ENCODE measurements at regions of chr3 and their contacts with region 1.

Region 1: GRCh38 chr3:17841190-17841828 is 98.9 kb upstream of the TBC1D5 start:
- DNase-seq: peak; percentile 79
- ATAC-seq: peak; percentile 94

Region 2: GRCh38 chr3:17258823-17259436 is 582.4 kb before region 1 on chr3:
- intact Hi-C with region 1: loop called (anchors 5 kb)
- DNase-seq: no peak
- ATAC-seq: no peak

Region 3: DNA sequence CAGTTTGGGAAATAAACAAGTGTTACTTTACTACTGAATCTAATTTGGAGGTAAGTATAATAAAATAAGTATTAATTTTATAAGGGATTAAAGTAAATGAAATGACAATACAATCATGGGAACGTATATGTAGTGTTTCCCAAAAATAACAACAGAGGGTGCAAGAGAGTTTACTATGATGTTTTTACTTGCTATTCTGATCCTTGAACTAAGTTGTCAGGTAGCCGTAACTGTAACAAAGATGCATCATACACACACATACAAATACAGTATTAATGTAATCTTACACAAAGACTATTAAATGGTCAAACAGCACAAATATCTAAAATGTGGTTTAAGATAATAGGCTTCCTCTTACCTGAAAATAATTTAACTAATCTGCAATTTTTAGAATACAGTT is 410.3 kb before region 1 on chr3:
- intact Hi-C with region 1: loop called (anchors 2 kb)
- DNase-seq: no peak
- ATAC-seq: peak; percentile 78

Region 4: GRCh38 chr3:19757773-19758172 is 1916.5 kb after region 1 on chr3:
- intact Hi-C with region 1: no loop called
- DNase-seq: no peak
- ATAC-seq: no peak

Measured in Right ventricle myocardium superior (tissue), 1 donor.